Naive thymus-derived CD4-positive, alpha-beta T cell (primary cell): ENCODE measurements at regions of chr4 and their contacts with region 1.

Region 1: GRCh38 chr4:36115312-36115711 is 129.0 kb downstream of the ARAP2 start:
- DNase-seq: no peak
- ATAC-seq: no peak
- H3K4me3 ChIP-seq: no peak overlapping the region
- H3K4me3 Mint-ChIP-seq: no peak overlapping the region
- H3K27ac ChIP-seq: no peak overlapping the region
- H3K27ac Mint-ChIP-seq: no peak overlapping the region
- H3K4me1 ChIP-seq: no peaks in the 10 kb centered on the region
- H3K4me1 Mint-ChIP-seq: peaks cover 0 to 5% (median 0%) of the 10 kb centered on the region in 7 donors
- H3K27me3 ChIP-seq: no peaks in the 10 kb centered on the region
- H3K27me3 Mint-ChIP-seq: no peaks in the 10 kb centered on the region

Region 2: GRCh38 chr4:36099527-36099926 is 15.8 kb before region 1 on chr4:
- CTCF ChIA-PET with region 1: no interaction called
- POLR2A ChIA-PET with region 1: no interaction called
- intact Hi-C with region 1: loop called in 1 of 2 experiments (anchors 2 kb)
- DNase-seq: no peak
- ATAC-seq: no peak
- H3K4me3 ChIP-seq: no peak overlapping the region
- H3K4me3 Mint-ChIP-seq: no peak overlapping the region
- H3K27ac ChIP-seq: no peak overlapping the region
- H3K27ac Mint-ChIP-seq: no peak overlapping the region
- H3K4me1 ChIP-seq: no peaks in the 10 kb centered on the region
- H3K4me1 Mint-ChIP-seq: peaks cover 0 to 5% (median 0%) of the 10 kb centered on the region in 7 donors
- H3K27me3 ChIP-seq: no peaks in the 10 kb centered on the region
- H3K27me3 Mint-ChIP-seq: no peaks in the 10 kb centered on the region